HepG2 (cell line): ENCODE measurements at regions of chr3 and their contacts with region 1.

Region 1: GRCh38 chr3:144770915-144771351 is 799.3 kb downstream of the DIPK2A start:
- DNase-seq: peak; percentile 32
- ATAC-seq: peak; percentile 79
- H3K4me3 ChIP-seq: no peak overlapping the region
- H3K27ac ChIP-seq: no peak overlapping the region
- H3K4me1 ChIP-seq: no peaks in the 10 kb centered on the region
- H3K27me3 ChIP-seq: no peaks in the 10 kb centered on the region
- CTCF ChIP-seq: peak; percentile 47
- EP300 ChIP-seq: no peak
- POLR2A ChIP-seq: no peak
- RAD21 ChIP-seq: no peak

Region 2: GRCh38 chr3:143885780-143886427 is 885.0 kb before region 1 on chr3:
- CTCF ChIA-PET with region 1: no interaction called
- POLR2A ChIA-PET with region 1: no interaction called
- in situ Hi-C with region 1: loop called (anchors 25 kb)
- intact Hi-C with region 1: no loop called
- DNase-seq: peak; percentile 41
- ATAC-seq: peak; percentile 93
- H3K4me3 ChIP-seq: no peak overlapping the region
- H3K27ac ChIP-seq: no peak overlapping the region
- H3K4me1 ChIP-seq: no peaks in the 10 kb centered on the region
- H3K27me3 ChIP-seq: no peaks in the 10 kb centered on the region
- CTCF ChIP-seq: peak; percentile 67
- EP300 ChIP-seq: no peak
- POLR2A ChIP-seq: no peak
- RAD21 ChIP-seq: peak; percentile 25; the same call in 1 of the 2 replicates

Region 3: DNA sequence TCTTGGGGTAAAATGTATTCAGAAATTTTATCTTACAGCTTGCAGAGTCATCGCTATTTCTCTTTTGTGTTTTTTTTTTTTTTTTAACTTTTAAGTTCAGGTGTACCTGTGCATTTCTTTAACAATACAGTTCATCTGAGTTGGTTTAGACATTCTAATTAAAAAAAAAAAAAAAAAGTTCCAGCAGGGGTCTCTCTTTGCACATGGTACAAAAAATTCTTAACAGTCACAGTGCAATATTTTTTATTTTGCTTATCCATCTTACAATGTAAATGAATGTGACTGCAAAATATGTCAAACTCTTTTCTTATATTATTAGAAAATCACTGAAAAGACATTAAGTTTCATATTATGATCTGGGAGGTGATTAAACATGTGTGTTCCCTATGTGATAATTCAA is 875.1 kb before region 1 on chr3:
- CTCF ChIA-PET with region 1: interaction called, 9 read pairs
- POLR2A ChIA-PET with region 1: no interaction called
- in situ Hi-C with region 1: loop called (anchors 25 kb)
- intact Hi-C with region 1: loop called (anchors 2 kb)
- DNase-seq: no peak
- ATAC-seq: no peak
- H3K4me3 ChIP-seq: no peak overlapping the region
- H3K27ac ChIP-seq: no peak overlapping the region
- H3K4me1 ChIP-seq: no peaks in the 10 kb centered on the region
- H3K27me3 ChIP-seq: no peaks in the 10 kb centered on the region
- CTCF ChIP-seq: no peak
- EP300 ChIP-seq: no peak
- POLR2A ChIP-seq: no peak
- RAD21 ChIP-seq: no peak

Region 4: DNA sequence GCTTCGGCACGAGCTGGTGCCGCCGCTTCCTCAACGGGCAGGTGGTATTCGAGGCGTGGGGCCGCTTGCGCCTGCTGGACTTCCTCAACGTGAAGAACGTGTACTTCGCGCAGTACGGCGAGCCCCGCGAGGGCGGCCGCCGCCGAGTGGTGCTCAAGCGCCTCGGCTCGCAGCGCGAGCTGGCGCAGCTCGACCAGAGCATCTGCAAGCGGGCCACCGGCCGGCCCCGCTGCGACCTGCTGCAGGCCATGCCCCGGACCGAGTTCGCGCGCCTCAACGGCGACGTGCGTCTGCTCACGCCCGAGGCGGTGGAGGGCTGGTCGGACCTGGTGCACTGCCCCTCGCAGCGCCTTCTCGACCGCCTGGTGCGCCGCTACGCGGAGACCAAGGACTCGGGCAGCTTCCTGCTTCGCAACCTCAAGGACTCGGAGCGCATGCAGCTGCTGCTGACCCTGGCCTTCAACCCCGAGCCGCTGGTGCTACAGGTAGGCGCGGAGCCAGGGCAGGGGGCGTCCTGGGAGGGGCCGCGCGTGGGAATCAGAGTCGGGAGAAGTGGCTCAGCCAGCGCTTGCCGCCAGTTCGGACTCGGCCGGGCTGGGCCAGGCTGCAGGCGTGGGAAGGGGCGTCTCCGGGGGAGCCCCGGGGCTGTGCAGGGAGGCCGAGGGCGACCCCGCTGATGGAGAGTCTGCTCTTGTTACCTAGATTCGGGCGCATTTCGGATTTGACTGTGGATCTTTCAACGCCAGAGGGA is 798.3 kb before region 1 on chr3:
- CTCF ChIA-PET with region 1: interaction called, 3 read pairs
- POLR2A ChIA-PET with region 1: no interaction called
- in situ Hi-C with region 1: no loop called
- intact Hi-C with region 1: loop called (anchors 5 kb)
- DNase-seq: peak; percentile 57
- ATAC-seq: peak; percentile 66
- H3K4me3 ChIP-seq: peak overlapping the region; percentile 72 to 80 (median 77); a peak in 5 of 6 replicates
- H3K27ac ChIP-seq: peak overlapping the region; percentile 73
- H3K4me1 ChIP-seq: peaks cover 32% of the 10 kb centered on the region
- H3K27me3 ChIP-seq: 0 out of 5 replicates have a peak, but pooled peaks cover 0 to 5% of the 10 kb centered on the region in 2 experiments
- CTCF ChIP-seq: peak; percentile 47
- EP300 ChIP-seq: no peak
- POLR2A ChIP-seq: no peak
- RAD21 ChIP-seq: no peak

Region 5: GRCh38 chr3:144622845-144623244 is 148.1 kb before region 1 on chr3:
- CTCF ChIA-PET with region 1: no interaction called
- POLR2A ChIA-PET with region 1: no interaction called
- in situ Hi-C with region 1: no loop called
- intact Hi-C with region 1: no loop called
- DNase-seq: no peak
- ATAC-seq: no peak
- H3K4me3 ChIP-seq: no peak overlapping the region
- H3K27ac ChIP-seq: no peak overlapping the region
- H3K4me1 ChIP-seq: no peaks in the 10 kb centered on the region
- H3K27me3 ChIP-seq: no peaks in the 10 kb centered on the region
- CTCF ChIP-seq: no peak
- EP300 ChIP-seq: no peak
- POLR2A ChIP-seq: no peak
- RAD21 ChIP-seq: no peak

Region 6: GRCh38 chr3:144687855-144688254 is 83.1 kb before region 1 on chr3:
- CTCF ChIA-PET with region 1: no interaction called
- POLR2A ChIA-PET with region 1: no interaction called
- in situ Hi-C with region 1: no loop called
- intact Hi-C with region 1: loop called (anchors 1 kb)
- DNase-seq: peak; percentile 46
- ATAC-seq: peak; percentile 89
- H3K4me3 ChIP-seq: no peak overlapping the region
- H3K27ac ChIP-seq: no peak overlapping the region
- H3K4me1 ChIP-seq: no peaks in the 10 kb centered on the region
- H3K27me3 ChIP-seq: no peaks in the 10 kb centered on the region
- CTCF ChIP-seq: peak; percentile 72
- EP300 ChIP-seq: no peak
- POLR2A ChIP-seq: no peak
- RAD21 ChIP-seq: no peak